ENCODE measurements at regions of chr12 and their contacts with region 1.

Region 1: GRCh38 chr12:91072931-91073330 is 15.1 kb upstream of the KERA start:
- DNase-seq: no peak
- ATAC-seq: no peak
- H3K4me3 ChIP-seq: no peak overlapping the region
- H3K4me3 Mint-ChIP-seq: no peak overlapping the region
- H3K27ac ChIP-seq: no peak overlapping the region
- H3K27ac Mint-ChIP-seq: no peak overlapping the region
- H3K4me1 ChIP-seq: no peaks in the 10 kb centered on the region
- H3K4me1 Mint-ChIP-seq: no peaks in the 10 kb centered on the region
- H3K27me3 ChIP-seq: no peaks in the 10 kb centered on the region
- H3K27me3 Mint-ChIP-seq: peaks cover 0 to 5% of the 10 kb centered on the region in 2 donors

Region 2: GRCh38 chr12:89618107-89618862 is 1454.6 kb before region 1 on chr12:
- CTCF ChIA-PET with region 1: no interaction called
- POLR2A ChIA-PET with region 1: interaction called in 1 of 2 experiments, 10 read pairs
- DNase-seq: no peak
- ATAC-seq: no peak
- H3K4me3 ChIP-seq: no peak overlapping the region
- H3K4me3 Mint-ChIP-seq: no peak overlapping the region
- H3K27ac ChIP-seq: no peak overlapping the region
- H3K27ac Mint-ChIP-seq: no peak overlapping the region
- H3K4me1 ChIP-seq: peaks cover 0 to 3% of the 10 kb centered on the region in 2 experiments
- H3K4me1 Mint-ChIP-seq: peaks cover 0 to 9% (median 8%) of the 10 kb centered on the region in 3 donors
- H3K27me3 ChIP-seq: no peaks in the 10 kb centered on the region
- H3K27me3 Mint-ChIP-seq: no peaks in the 10 kb centered on the region

Region 3: DNA sequence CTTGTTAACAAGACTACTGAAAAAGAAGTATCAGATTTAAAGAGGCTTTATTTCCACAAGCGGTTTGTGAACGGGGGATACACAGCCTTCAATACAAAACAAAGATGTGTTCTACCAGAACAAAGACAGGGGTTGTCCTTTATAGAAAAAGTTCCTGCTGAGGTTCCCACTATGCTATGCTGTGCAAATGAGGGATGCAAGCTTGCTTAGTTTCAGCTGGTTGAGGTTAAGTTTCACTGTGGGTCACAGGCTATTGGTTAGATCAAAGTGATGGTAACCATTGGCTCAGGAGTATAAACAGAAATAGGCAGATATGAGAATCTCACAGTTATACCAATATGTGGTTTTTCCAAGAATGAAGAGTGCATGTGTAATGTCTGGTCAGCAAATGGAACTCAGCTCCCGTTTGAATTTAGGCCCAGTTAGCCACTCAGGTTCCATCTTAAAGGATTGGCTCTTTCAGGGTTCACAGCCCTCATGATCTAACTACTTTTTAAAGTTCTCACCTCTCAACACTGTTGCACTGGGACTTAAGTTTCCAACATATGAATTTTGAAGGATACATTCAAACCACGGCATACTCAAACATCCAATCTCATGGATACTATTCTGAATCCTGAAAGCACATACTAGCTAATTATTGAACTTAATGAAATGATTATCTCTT is 325.1 kb after region 1 on chr12:
- CTCF ChIA-PET with region 1: no interaction called
- POLR2A ChIA-PET with region 1: no interaction called
- DNase-seq: no peak
- ATAC-seq: no peak
- H3K4me3 ChIP-seq: no peak overlapping the region
- H3K4me3 Mint-ChIP-seq: no peak overlapping the region
- H3K27ac ChIP-seq: no peak overlapping the region
- H3K27ac Mint-ChIP-seq: no peak overlapping the region
- H3K4me1 ChIP-seq: no peaks in the 10 kb centered on the region
- H3K4me1 Mint-ChIP-seq: no peaks in the 10 kb centered on the region
- H3K27me3 ChIP-seq: peaks cover 0 to 3% of the 10 kb centered on the region in 2 experiments
- H3K27me3 Mint-ChIP-seq: peaks cover 0 to 3% of the 10 kb centered on the region in 2 donors